Activated naive CD4-positive, alpha-beta T cell treated with anti-CD3 and anti-CD28 coated beads for 36 hours (primary cell): ENCODE measurements at regions of chr1 and their contacts with region 1.

Region 1: GRCh38 chr1:59947047-59947938 is 20.7 kb upstream of the CYP2J2 start:
- DNase-seq: peak; percentile 68
- H3K4me3 Mint-ChIP-seq: no peak overlapping the region
- H3K27ac Mint-ChIP-seq: no peak overlapping the region
- H3K4me1 Mint-ChIP-seq: no peaks in the 10 kb centered on the region
- H3K27me3 Mint-ChIP-seq: no peaks in the 10 kb centered on the region

Region 2: DNA sequence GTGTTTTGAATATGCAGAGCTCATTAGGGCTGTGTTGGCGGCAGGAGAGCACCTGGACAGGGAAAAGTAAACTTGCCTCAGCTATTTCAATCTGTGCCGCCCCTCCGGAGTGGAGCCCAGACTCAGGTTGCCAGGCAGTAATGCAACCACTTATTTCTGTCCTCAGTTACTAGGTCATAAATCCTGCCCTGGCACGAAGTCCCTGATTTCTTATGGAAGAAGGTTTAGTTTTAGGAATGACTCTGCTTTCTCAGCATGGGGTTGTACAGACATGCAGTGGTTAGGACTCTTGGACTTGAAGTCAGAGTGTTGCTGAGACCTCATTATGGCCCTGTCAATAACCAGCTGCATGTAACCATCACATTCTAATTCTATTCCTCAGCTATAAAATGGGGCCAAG is 748.7 kb before region 1 on chr1:
- CTCF ChIA-PET with region 1: no interaction called
- intact Hi-C with region 1: loop called (anchors 5 kb)
- DNase-seq: no peak
- H3K4me3 Mint-ChIP-seq: no peak overlapping the region
- H3K27ac Mint-ChIP-seq: no peak overlapping the region
- H3K4me1 Mint-ChIP-seq: no peaks in the 10 kb centered on the region
- H3K27me3 Mint-ChIP-seq: peaks cover 6% of the 10 kb centered on the region

Region 3: DNA sequence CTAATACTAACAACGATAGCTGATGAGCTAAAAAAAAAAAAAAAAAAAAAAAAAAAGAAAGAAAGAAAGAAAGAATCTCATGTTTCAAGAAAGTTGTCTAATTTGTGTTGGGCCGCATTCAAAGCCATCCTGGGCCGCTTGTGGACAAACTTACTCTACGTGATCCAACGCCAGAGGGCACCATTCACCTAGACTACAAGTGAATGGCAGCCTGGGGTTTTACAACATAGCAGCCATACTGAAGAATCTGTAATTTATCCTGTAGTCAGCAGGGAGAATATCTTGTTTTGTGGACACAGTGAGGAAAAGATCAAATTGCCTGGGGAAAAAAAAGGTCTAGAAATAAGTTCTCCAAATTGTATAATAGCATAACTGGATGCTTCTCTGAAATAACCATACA is 67.7 kb before region 1 on chr1:
- CTCF ChIA-PET with region 1: interaction called, 95 read pairs
- intact Hi-C with region 1: loop called (anchors 1 kb)
- DNase-seq: peak; percentile 76
- H3K4me3 Mint-ChIP-seq: no peak overlapping the region
- H3K27ac Mint-ChIP-seq: no peak overlapping the region
- H3K4me1 Mint-ChIP-seq: no peaks in the 10 kb centered on the region
- H3K27me3 Mint-ChIP-seq: no peaks in the 10 kb centered on the region

Region 4: DNA sequence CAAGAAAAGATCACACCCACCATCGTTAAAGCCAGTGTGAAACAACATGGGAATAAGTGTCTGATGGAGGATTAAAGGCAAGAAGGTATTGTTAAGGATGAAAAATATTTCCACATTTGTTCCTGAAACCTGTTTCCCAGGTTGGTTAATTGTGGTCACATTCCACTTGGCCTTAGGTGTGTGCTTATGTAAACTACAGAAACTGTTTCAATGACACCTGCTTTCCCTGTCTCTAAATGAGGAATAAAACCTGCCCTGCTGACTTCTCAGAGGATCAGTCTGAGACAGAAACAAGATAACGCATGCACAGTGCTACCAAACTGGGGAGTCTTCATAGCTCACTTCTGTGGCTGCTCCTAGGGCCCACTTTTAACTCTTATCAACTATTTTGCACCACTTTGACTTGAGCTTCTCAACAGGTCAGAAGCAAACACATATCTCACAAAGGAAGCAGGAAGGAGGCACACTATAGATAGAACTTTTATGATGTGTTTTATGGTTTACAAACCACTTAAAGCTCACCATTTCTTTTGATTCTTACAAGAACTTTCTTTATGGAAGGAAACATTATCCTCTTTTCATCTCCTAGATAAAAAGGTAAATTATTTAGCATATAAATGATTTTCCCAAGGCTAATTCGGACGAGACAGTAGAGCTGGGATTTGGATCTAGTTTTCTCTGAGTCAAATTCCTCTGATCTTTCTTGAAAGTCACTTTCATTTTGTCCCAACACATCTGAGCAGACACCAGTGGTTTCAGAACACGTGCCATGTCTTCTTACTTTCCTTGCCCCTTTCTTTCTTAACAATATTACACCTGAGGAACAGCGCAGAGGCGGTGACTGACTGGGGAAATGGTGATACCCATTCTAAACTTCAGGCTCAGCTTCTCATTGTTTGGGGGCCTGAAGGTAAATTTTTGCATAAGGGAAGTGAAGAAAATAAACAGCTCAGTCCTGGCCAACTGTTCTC is 54.2 kb before region 1 on chr1:
- CTCF ChIA-PET with region 1: interaction called, 13 read pairs
- intact Hi-C with region 1: no loop called
- DNase-seq: peak; percentile 14
- H3K4me3 Mint-ChIP-seq: no peak overlapping the region
- H3K27ac Mint-ChIP-seq: peak overlapping the region; percentile 0
- H3K4me1 Mint-ChIP-seq: peaks cover 16% of the 10 kb centered on the region
- H3K27me3 Mint-ChIP-seq: no peaks in the 10 kb centered on the region

Region 5: DNA sequence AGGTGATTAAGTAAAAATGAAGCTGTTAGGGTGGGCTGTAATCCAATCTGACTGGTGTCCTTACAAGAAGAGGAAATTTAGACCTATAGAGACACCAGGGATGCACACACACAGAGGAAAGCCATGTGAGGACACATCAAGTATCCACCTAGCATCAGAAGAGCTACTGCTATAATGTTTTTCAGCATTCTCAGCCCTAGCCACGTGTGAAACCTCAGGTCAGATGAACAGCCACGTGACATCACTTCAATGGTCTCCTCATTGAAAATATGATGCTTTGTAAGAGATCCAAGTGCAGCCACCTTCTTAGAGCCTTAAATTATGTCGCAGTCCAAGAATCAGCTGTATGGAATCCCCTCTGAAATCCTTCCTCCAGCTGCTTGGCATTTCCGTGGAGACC is 61.2 kb after region 1 on chr1:
- CTCF ChIA-PET with region 1: no interaction called
- intact Hi-C with region 1: no loop called
- DNase-seq: no peak
- H3K4me3 Mint-ChIP-seq: no peak overlapping the region
- H3K27ac Mint-ChIP-seq: no peak overlapping the region
- H3K4me1 Mint-ChIP-seq: no peaks in the 10 kb centered on the region
- H3K27me3 Mint-ChIP-seq: peaks cover 15% of the 10 kb centered on the region

Region 6: DNA sequence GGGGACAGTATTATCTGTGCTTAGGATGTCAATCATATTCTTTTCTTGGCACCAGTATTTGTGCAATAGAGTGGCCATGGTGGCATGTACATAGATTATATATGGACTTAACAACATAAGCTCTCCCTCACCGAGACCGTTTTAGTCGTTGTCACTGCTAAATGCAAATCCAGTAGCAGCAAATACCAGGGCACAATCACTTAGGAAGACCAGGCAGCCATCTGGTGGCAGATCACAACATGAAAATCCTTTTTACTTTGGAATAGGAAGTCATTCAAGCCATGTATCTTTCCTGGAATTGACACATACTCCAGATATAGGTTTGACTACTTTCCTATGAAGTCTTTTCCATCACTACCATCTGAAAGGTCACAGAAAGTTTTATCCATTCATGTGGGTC is 179.4 kb after region 1 on chr1:
- CTCF ChIA-PET with region 1: no interaction called
- intact Hi-C with region 1: no loop called
- DNase-seq: no peak
- H3K4me3 Mint-ChIP-seq: no peak overlapping the region
- H3K27ac Mint-ChIP-seq: no peak overlapping the region
- H3K4me1 Mint-ChIP-seq: no peaks in the 10 kb centered on the region
- H3K27me3 Mint-ChIP-seq: no peaks in the 10 kb centered on the region